Transverse colon (tissue), 4 donors: ENCODE measurements at regions of chr5 and their contacts with region 1.

Region 1: DNA sequence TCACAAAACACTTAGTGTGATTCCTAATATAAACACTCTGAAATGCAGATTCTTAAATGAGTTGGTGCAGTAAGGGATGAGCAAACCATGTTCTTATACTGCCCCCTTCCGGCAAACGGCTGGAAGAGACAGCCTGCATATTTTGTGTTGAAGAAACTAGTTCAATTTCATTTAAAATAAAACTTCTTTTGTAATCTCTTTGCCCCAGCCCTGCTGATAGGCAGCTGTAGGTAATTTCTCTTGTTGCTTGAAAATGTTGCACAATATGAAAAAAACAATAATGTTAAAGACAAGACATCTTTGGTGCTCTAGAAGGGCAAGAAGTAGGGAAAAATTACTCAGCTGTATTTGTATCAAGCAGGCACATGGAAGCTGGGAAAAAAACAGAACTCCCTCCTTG is 89.7 kb upstream of the CCNG1 start:
- DNase-seq: peak; percentile 50
- H3K4me3 ChIP-seq: no peak overlapping the region
- H3K27ac ChIP-seq: no peak overlapping the region
- H3K4me1 ChIP-seq: no peaks in the 10 kb centered on the region
- H3K27me3 ChIP-seq: no peaks in the 10 kb centered on the region
- CTCF ChIP-seq: peak; percentile 63 to 82 (median 74)
- EP300 ChIP-seq: no peak
- POLR2A ChIP-seq: no peak

Region 2: DNA sequence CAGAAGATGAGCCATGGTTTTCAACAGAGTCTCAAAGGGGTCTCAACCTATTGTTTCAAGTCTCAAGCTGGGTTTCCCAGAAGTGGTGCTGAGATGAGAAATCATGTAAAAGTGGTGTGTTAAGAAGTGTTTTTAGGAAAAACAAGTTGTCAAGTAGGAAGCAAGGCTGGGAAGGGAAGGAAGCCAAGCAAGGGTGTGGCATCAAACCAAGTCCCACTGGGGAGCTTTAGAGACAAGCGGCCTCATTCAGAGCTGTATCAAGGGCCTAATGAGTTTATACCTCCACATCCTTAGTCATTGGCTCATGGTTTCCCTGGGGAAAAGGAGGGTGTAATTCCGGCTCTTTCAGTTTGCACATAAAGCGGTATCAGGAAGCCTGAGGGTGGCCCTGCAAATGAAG is 1774.8 kb before region 1 on chr5:
- in situ Hi-C with region 1: loop called in 1 of 4 experiments (anchors 25 kb)
- intact Hi-C with region 1: no loop called
- DNase-seq: no peak
- H3K4me3 ChIP-seq: no peak overlapping the region
- H3K27ac ChIP-seq: no peak overlapping the region
- H3K4me1 ChIP-seq: no peaks in the 10 kb centered on the region
- H3K27me3 ChIP-seq: no peaks in the 10 kb centered on the region
- CTCF ChIP-seq: no peak
- EP300 ChIP-seq: no peak
- POLR2A ChIP-seq: no peak